AG04449 (cell line): ENCODE measurements at regions of chr7 and their contacts with region 1.

Region 1: DNA sequence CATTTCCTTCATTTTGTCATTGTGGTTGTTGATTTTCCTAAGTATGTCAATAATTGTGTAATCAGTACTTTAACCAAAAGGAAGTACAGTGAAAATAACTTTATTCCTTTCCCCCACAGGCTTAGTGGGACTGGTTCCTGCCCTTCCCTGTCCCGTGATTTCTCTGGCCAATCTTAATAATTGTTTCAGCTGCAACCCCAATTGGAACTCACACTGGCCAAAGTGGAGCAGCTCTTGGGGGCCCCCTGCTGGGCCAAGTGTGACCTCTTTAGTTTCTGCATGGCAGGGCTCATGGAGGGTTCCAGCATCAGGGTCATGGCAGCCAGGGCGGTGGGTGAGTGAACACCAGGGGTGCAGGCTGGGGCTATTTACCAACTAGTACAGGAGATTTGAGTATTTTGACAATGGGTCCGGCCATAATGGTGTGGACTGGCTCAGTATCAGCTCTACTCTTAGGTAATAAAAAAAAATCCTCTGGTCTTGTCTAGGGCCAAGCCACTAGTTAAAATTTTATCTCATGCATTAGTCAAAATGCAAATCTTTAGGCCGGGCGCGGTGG is 31.7 kb downstream of the CYCS start:
- DNase-seq: no peak
- H3K4me3 ChIP-seq: no peak overlapping the region
- CTCF ChIP-seq: peak; percentile 87

Region 2: DNA sequence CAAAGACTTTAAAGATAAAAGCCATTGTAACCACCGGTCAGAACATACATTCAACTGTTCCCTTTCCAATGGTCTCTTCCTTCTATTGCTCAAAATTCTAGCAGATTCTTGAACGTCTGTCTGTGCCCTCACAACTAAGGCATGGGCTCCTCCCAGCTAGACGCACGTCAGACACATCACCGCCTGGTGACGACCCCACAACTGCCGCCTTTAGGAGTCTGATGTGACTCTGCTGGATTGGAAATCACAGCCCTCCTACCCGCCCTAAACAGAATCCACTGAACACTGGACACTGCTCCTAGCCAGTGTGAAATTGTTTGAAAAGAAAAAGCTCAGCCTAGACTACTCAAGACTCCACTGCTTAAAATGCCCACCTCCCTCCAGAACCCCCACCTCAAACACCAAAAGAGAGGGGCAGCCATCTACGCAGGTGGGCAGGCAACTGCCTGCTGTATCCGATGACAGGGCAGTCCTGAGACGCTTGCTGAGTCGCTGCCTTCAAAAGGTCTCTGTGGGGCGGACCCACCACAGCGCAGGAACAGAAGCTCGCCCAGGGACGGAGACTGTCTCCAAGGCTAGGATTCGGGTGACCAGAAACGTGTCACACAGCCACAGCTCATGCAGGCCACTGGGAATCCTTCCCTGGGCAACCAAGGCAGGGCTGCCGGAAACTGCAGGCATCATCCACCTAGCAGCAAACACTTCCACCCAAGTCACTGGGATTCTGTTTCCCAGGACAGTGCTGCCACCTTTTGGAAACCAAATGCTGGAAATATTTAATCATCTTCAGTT is 370.8 kb before region 1 on chr7:
- CTCF ChIA-PET with region 1: interaction called, 18 read pairs
- POLR2A ChIA-PET with region 1: no interaction called
- DNase-seq: no peak
- H3K4me3 ChIP-seq: no peak overlapping the region
- CTCF ChIP-seq: peak; percentile 45

Region 3: DNA sequence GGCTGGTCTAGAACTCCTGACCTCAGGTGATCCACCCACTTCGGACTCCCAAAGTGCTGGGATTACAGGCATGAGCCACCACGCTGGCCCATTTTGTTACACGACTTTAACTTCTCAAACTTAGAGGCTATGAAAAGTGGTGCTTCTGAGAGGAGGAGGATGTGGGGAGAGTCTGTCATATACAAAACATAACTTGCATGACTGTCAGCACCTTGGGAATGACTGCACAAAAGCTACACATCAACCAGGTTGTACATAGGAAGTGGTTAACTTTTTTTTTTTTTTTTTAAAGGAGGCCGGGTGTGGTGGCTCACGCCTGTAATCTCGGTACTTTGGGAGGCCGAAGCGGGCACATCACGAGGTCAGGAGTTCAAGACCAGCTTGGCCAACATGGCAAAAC is 292.7 kb before region 1 on chr7:
- CTCF ChIA-PET with region 1: interaction called, 928 read pairs
- POLR2A ChIA-PET with region 1: no interaction called
- DNase-seq: no peak
- H3K4me3 ChIP-seq: no peak overlapping the region
- CTCF ChIP-seq: no peak

Region 4: GRCh38 chr7:24851786-24852185 is 241.6 kb before region 1 on chr7:
- CTCF ChIA-PET with region 1: interaction called, 24 read pairs
- POLR2A ChIA-PET with region 1: no interaction called
- DNase-seq: no peak
- H3K4me3 ChIP-seq: no peak overlapping the region
- CTCF ChIP-seq: no peak

Region 5: GRCh38 chr7:24926623-24927524 is 166.5 kb before region 1 on chr7:
- CTCF ChIA-PET with region 1: interaction called, 10 read pairs
- POLR2A ChIA-PET with region 1: no interaction called
- DNase-seq: peak; percentile 87
- H3K4me3 ChIP-seq: no peak overlapping the region
- CTCF ChIP-seq: no peak

Region 6: DNA sequence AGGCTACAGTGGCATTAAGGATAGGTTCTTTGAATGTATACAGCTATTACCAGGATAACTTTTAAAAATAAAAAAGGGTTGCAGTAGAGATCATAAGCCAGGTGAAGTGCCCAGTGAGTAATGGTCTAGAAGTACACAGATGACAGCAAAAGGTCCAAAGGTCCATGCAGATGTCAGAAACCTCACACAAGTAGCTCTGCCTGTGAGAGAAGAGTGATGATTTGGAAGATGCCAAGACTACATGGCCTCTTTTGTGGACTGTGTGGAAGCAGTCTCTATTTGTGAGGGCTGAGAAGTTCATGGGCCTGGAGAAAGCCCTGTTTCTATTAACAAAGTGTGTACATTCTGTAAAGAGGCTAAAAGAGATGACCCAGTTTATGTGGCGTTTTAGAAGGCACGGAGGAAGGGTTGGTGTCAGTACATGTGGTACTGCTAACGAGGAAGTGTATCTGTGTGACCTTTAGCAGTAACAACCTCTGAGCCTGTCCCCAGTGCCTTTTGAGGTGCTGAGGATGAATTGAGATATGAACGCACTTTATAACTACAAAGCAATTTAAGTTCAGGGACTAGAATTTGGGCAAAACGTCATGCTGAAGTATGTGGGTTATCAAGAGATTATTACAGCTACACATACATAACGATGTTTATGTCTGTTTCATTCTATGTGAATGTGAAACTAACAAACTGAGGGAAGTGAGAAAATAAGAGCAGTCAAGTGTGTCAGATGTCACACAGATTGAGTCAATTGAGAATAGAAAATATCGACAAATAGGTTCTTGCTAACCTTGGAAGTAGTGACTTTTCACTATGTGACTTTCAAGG is 24.1 kb after region 1 on chr7:
- CTCF ChIA-PET with region 1: interaction called, 35 read pairs
- POLR2A ChIA-PET with region 1: no interaction called
- DNase-seq: no peak
- H3K4me3 ChIP-seq: no peak overlapping the region
- CTCF ChIP-seq: no peak

Region 7: DNA sequence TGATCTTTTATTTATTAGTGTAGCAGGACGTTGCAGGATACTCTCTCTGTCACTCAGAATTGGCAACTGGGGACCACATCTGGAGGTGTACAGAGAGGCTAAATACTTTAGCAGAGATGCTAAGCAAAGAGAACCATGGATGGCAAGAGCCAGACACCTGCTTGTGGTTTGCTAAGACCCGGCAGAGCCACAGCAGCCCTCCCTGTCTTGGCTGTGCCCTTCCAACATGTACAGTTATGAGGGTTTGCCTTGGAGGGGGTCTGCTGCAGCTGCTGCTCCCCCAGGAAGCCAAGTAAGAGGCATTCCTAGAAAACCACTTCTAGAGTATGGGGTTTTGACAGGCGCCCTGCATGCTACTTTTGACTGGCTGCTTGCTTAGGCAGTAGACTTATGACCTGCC is 129.9 kb after region 1 on chr7:
- CTCF ChIA-PET with region 1: no interaction called
- POLR2A ChIA-PET with region 1: no interaction called
- DNase-seq: no peak
- H3K4me3 ChIP-seq: no peak overlapping the region
- CTCF ChIP-seq: no peak